ENCODE measurements at regions of chr15 and their contacts with region 1.

Region 1: DNA sequence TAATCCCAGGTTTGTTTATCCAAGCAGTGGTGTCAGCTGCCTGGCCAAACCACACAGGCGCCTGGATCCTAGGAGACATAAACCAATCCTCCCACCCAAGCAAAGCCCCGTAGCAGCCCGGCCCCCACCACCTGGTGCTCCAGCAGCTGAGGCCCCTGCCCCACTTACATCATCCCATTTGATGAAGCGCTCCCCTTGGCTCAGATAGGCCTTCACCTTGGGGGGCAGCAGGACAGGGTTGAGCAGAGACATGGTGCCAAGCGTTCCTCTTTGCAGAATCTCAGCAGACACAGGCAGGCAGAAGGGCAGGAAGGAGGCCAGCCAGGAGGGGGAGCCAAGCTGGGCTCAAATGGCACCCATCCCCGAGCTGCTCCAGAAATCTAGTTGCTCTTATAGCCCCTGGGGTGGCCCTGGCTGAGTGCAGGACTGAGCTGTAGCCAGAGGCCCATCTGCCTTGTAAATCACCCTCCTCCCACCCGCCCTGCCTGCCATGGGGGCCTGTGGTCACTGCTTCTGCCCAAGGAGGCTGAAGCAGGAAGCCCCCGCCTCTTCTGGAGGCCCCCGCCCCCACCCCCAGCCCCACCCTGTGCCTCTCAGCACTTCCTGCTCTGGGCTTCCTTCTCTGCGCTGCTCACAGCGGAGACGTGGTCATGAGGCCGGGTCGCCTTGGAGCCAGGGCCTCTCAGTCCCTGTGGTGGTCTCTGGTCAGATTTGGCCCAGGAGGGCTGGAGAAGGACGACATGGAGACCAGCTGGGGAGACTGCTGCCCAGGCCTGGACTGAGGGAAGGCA is at the start of gene PLCB2:
- DNase-seq: peak; percentile 84
- ATAC-seq: peak; percentile 79
- H3K4me3 ChIP-seq: peak within 1 kb of the TSS; percentile 81 to 98 (median 90)
- H3K4me3 Mint-ChIP-seq: peak within 1 kb of the TSS; percentile 98
- H3K27ac ChIP-seq: peak within 1 kb of the TSS; percentile 77 to 96
- H3K27ac Mint-ChIP-seq: peak within 1 kb of the TSS; percentile 99
- H3K4me1 ChIP-seq: peaks cover 25 to 36% of the 10 kb centered on the region in 2 donors
- H3K4me1 Mint-ChIP-seq: peaks cover 48% of the 10 kb centered on the region
- H3K27me3 ChIP-seq: no peaks in the 10 kb centered on the region
- H3K27me3 Mint-ChIP-seq: no peaks in the 10 kb centered on the region
- CTCF ChIP-seq: peak; percentile 59
- total RNA-seq, gene PLCB2: 155 and 166 TPM in 2 replicates

Region 2: DNA sequence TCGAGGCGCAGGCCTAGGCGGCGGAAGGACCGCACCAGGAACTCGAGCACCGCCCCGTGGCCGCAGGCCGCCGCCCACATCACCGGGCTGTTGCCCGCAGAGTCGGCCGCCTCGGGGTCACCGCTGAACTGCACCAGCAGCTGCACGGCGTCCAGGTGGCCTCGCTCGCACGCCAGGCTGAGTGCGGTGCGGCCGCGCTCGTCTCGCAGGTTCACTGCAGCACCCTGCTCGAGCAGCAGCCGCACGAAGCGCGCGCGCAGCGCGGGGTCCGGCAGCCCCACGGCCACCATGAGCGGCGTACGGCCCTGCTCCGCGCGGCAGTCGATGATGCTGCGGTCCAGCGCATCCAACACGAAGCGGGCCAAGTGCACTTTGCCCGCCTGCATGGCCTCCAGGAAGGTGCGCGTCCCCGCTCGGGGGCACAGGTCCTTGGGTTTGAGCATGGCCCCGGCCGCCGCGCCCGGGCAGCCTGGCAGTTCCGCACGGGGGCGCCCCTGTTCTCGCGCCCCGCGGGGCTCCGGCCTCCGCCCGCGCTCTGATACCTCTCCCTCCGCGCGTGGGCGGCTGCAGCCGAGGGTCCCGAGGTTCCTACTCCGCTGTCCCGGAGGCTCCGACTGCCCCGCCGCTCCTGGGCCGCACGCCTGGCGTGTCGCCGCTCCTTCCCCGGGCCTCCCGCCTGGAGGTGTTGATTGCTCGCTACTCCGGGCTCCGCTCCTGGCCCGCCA is 25.3 kb before region 1 on chr15:
- CTCF ChIA-PET with region 1: interaction called, 227 read pairs
- POLR2A ChIA-PET with region 1: interaction called, 6 read pairs
- intact Hi-C with region 1: loop called (anchors 1 kb)
- DNase-seq: peak; percentile 79
- ATAC-seq: peak; percentile 65
- H3K4me3 ChIP-seq: peak overlapping the region; percentile 21 to 76 (median 56)
- H3K4me3 Mint-ChIP-seq: peak overlapping the region; percentile 79
- H3K27ac ChIP-seq: no peak overlapping the region
- H3K27ac Mint-ChIP-seq: no peak overlapping the region
- H3K4me1 ChIP-seq: peaks cover 17 to 29% of the 10 kb centered on the region in 2 donors
- H3K4me1 Mint-ChIP-seq: peaks cover 22% of the 10 kb centered on the region
- H3K27me3 ChIP-seq: peaks cover 0 to 48% (median 23%) of the 10 kb centered on the region in 4 experiments
- H3K27me3 Mint-ChIP-seq: peaks cover 21% of the 10 kb centered on the region
- CTCF ChIP-seq: peak; percentile 71

Region 3: GRCh38 chr15:40290918-40291574 is 16.6 kb before region 1 on chr15:
- CTCF ChIA-PET with region 1: interaction called, 58 read pairs
- POLR2A ChIA-PET with region 1: interaction called, 3 read pairs
- intact Hi-C with region 1: no loop called
- DNase-seq: no peak
- ATAC-seq: no peak
- H3K4me3 ChIP-seq: no peak overlapping the region
- H3K4me3 Mint-ChIP-seq: no peak overlapping the region
- H3K27ac ChIP-seq: no peak overlapping the region
- H3K27ac Mint-ChIP-seq: no peak overlapping the region
- H3K4me1 ChIP-seq: no peaks in the 10 kb centered on the region
- H3K4me1 Mint-ChIP-seq: peaks cover 2% of the 10 kb centered on the region
- H3K27me3 ChIP-seq: no peaks in the 10 kb centered on the region
- H3K27me3 Mint-ChIP-seq: no peaks in the 10 kb centered on the region
- CTCF ChIP-seq: no peak